ENCODE measurements at regions of chr7 and their contacts with region 1.

Region 1: DNA sequence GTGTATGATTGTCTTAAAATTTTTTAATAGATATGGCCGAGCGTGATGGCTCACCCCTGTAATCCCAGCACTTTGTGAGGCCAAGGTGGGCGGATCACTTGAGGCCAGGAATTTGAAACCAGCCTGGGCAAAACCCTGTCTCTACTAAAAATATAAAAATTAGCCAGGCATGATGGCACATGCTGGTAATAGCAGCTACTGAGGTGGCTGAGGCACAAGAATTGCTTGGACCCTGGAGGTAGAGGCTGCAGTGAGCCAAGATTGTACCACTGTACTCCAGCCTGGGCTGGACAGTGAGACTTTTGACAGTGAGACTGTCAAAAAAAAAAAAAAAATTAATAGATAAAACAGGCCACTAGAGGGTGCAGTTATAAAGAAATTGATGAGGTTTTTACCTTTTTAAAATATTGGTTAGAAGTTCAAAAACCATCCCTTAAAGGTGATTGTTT is 20.5 kb downstream of the NOM1 start:
- DNase-seq: no peak
- ATAC-seq: peak; percentile 77
- H3K4me3 ChIP-seq: no peak overlapping the region
- H3K27ac ChIP-seq: no peak overlapping the region
- H3K4me1 ChIP-seq: no peaks in the 10 kb centered on the region
- H3K27me3 ChIP-seq: no peaks in the 10 kb centered on the region
- CTCF ChIP-seq: peak in 1 of 3 experiments; percentile 14; a peak in 2 of 6 replicates
- EP300 ChIP-seq: no peak
- POLR2A ChIP-seq: no peak
- RAD21 ChIP-seq: 0 out of 2 replicates have a peak, but pooled peaks have one; percentile 20

Region 2: GRCh38 chr7:156949541-156950380 is 20.2 kb before region 1 on chr7 and contains the start of gene NOM1:
- CTCF ChIA-PET with region 1: interaction called, 11 read pairs
- POLR2A ChIA-PET with region 1: no interaction called
- RAD21 ChIA-PET with region 1: no interaction called
- SMC1A ChIA-PET with region 1: interaction called, 4 read pairs
- in situ Hi-C with region 1: no loop called
- intact Hi-C with region 1: no loop called
- DNase-seq: peak; percentile 20
- ATAC-seq: peak; percentile 93
- H3K4me3 ChIP-seq: peak within 1 kb of the TSS; percentile 91
- H3K27ac ChIP-seq: peak within 1 kb of the TSS; percentile 74
- H3K4me1 ChIP-seq: peaks cover 2% of the 10 kb centered on the region; the same call in 1 of the 2 replicates
- H3K27me3 ChIP-seq: no peaks in the 10 kb centered on the region; a peak in 1 of 4 replicates
- CTCF ChIP-seq: peak; percentile 70 to 82 (median 72); a peak in 5 of 6 replicates
- EP300 ChIP-seq: no peak
- POLR2A ChIP-seq: peak; percentile 92
- RAD21 ChIP-seq: peak; percentile 55
- polyA plus RNA-seq, gene NOM1: 2.9 to 4.2 TPM

Region 3: GRCh38 chr7:157250605-157251228 is 280.7 kb after region 1 on chr7:
- CTCF ChIA-PET with region 1: interaction called, 28 read pairs
- POLR2A ChIA-PET with region 1: no interaction called
- RAD21 ChIA-PET with region 1: interaction called, 8 read pairs
- SMC1A ChIA-PET with region 1: interaction called, 5 read pairs
- in situ Hi-C with region 1: loop called (anchors 10 kb)
- intact Hi-C with region 1: loop called (anchors 1 kb)
- DNase-seq: no peak
- ATAC-seq: peak; percentile 94
- H3K4me3 ChIP-seq: no peak overlapping the region
- H3K27ac ChIP-seq: no peak overlapping the region
- H3K4me1 ChIP-seq: no peaks in the 10 kb centered on the region
- H3K27me3 ChIP-seq: no peaks in the 10 kb centered on the region
- CTCF ChIP-seq: peak; percentile 69 to 84 (median 80)
- EP300 ChIP-seq: no peak
- POLR2A ChIP-seq: no peak
- RAD21 ChIP-seq: peak; percentile 46

Region 4: DNA sequence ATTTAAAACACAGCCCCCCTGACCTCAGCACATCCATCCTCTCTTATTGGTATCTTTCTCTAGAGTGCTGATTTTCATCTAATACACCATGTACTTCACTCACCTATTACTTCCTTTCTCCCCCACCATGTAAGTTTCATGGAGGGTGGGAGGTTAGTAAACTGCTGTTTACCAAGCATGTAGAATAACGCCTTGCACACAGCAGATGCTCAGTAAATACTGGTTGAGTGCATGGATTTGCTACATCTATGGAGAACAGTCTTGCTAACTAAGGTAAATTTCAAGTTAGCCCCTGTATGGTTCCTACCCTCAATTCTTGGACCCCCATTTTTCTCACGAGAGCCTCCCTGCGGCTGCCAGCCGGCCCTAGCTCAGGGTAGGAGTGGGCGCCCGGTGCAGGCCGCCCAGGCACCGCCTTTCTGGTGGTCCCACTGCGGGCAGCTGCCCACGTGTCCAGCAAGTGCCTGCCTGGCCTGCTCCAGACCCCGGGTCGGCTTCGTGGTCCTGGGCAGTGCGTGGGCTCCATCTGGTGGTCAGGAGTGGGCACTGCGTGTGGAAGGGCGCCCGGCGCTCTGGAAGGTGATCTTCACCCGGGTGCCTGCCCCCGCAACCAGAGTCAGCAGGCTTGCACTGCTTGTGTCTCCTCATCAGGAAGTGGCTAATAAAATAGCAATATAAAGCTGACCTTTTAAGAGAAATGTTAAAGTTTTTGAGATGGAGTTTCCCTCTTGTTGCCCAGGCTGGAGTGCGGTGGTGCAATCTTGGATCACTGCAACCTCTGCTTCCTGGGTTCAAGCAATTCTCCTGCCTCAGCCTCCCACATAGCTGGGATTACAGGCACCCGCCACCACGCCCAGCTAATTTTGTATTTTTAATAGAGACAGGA is 303.5 kb after region 1 on chr7:
- CTCF ChIA-PET with region 1: interaction called, 7 read pairs
- POLR2A ChIA-PET with region 1: interaction called, 5 read pairs
- RAD21 ChIA-PET with region 1: interaction called, 5 read pairs
- SMC1A ChIA-PET with region 1: interaction called, 4 read pairs
- in situ Hi-C with region 1: loop called (anchors 5 kb)
- intact Hi-C with region 1: loop called (anchors 2 kb)
- DNase-seq: no peak
- ATAC-seq: peak; percentile 91
- H3K4me3 ChIP-seq: no peak overlapping the region
- H3K27ac ChIP-seq: no peak overlapping the region
- H3K4me1 ChIP-seq: no peaks in the 10 kb centered on the region
- H3K27me3 ChIP-seq: no peaks in the 10 kb centered on the region; a peak in 1 of 4 replicates
- CTCF ChIP-seq: peak; percentile 95 to 99 (median 96)
- EP300 ChIP-seq: no peak
- POLR2A ChIP-seq: no peak
- RAD21 ChIP-seq: peak; percentile 87

Measured in GM12878 (cell line).